PC-9 (cell line): ENCODE measurements at regions of chr7 and their contacts with region 1.

Region 1: DNA sequence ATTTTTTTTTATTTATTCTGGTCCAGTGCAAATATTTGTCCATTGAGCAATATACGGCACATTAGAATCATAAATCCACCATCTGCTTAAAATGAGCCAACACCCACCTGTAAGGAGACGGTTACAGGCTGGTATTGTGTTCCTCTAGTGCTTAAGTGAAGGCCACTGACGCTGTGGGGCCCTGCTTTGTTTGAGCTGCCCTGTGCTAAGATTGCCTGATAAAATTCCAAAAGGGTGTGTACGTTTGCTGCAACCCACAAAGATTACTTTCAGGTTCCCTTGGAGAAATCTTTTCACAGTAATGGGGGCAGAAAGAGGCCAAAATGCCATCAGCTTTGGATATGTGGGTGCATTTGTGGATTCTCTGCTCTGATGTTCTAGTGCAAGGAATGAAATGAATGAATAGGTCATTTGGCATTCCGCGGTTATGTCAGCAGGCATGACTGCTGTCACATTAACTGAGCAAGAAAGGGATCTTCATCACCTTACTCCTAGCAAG is 34.4 kb downstream of the AGR3 start:
- DNase-seq: peak; percentile 90 to 100
- H3K4me3 ChIP-seq: peak overlapping the region; percentile 39; the same call in 1 of the 2 replicates
- H3K27ac ChIP-seq: peak overlapping the region; percentile 87
- H3K4me1 ChIP-seq: peaks cover 59% of the 10 kb centered on the region
- H3K27me3 ChIP-seq: no peaks in the 10 kb centered on the region
- CTCF ChIP-seq: no peak

Region 2: DNA sequence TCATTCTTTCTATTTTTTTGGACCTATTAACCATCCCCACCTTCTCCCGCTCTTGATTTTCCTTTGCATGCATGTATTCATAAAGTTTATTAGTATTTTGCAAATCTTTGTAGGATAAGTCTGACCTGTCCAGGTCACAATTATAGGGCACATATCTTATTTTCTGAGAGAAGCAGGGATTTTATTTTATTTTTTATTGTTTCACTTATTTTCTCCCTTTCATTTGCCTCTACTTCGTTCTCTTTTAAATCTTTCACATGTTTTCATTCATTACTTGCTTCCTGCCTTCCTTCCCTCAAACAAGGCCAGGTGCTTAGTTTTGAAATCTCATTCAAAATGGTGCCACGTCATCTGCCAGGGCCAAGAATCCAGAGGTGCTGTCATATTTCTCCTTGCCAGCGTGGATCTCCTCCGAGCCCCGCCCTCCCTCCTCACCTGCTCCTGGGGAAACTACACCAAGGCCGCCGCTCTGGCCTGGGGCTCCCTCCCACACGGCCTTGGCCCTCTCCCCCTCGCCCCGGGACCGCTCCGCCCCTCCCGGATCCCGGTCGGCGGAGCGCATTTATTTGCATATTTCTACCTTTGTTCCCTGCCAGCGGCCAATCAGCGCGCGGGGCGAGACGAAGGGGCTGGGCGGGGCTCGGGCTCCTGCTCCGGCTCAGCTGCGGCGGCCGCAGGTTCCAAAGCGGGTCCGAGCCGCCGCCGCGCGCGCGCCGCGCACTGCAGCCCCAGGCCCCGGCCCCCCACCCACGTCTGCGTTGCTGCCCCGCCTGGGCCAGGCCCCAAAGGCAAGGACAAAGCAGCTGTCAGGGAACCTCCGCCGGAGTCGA is 94.1 kb before region 1 on chr7 and contains the start of gene TSPAN13:
- CTCF ChIA-PET with region 1: no interaction called
- POLR2A ChIA-PET with region 1: no interaction called
- intact Hi-C with region 1: loop called (anchors 2 kb)
- DNase-seq: peak; percentile 97 to 99
- H3K4me3 ChIP-seq: peak within 1 kb of the TSS; percentile 65
- H3K27ac ChIP-seq: peak within 1 kb of the TSS; percentile 60
- H3K4me1 ChIP-seq: peaks cover 28% of the 10 kb centered on the region
- H3K27me3 ChIP-seq: no peaks in the 10 kb centered on the region
- CTCF ChIP-seq: no peak
- total RNA-seq, gene TSPAN13: 26.5 and 31.1 TPM in 2 replicates

Region 3: DNA sequence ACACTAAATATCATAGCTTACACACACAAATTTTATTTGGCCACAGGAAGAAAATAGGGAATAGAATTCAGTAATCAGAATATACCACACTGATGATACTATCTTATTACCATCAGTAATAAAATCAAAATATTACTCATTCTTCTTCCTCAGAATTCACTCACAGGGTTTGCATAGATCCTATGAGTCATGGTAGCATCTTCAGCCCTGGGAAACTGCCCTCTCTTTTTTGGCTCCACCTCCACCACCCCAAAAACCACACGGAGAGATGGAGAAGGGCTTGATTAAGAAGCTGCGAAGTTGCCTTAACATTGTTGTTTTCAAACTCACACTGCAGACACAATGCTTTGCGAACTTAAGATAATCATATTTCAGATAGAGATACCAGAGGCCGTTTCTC is 296.9 kb after region 1 on chr7:
- CTCF ChIA-PET with region 1: no interaction called
- POLR2A ChIA-PET with region 1: no interaction called
- intact Hi-C with region 1: no loop called
- DNase-seq: peak in 1 of 2 experiments; percentile 12
- H3K4me3 ChIP-seq: no peak overlapping the region
- H3K27ac ChIP-seq: no peak overlapping the region
- H3K4me1 ChIP-seq: peaks cover 15% of the 10 kb centered on the region; the same call in 1 of the 2 replicates
- H3K27me3 ChIP-seq: no peaks in the 10 kb centered on the region
- CTCF ChIP-seq: no peak

Region 4: GRCh38 chr7:18228686-18229085 is 1381.3 kb after region 1 on chr7:
- CTCF ChIA-PET with region 1: interaction called, 21 read pairs
- POLR2A ChIA-PET with region 1: no interaction called
- intact Hi-C with region 1: no loop called
- DNase-seq: no peak
- H3K4me3 ChIP-seq: no peak overlapping the region
- H3K27ac ChIP-seq: no peak overlapping the region
- H3K4me1 ChIP-seq: no peaks in the 10 kb centered on the region
- H3K27me3 ChIP-seq: no peaks in the 10 kb centered on the region
- CTCF ChIP-seq: no peak

Region 5: GRCh38 chr7:18505870-18506460 is 1658.5 kb after region 1 on chr7:
- CTCF ChIA-PET with region 1: no interaction called
- POLR2A ChIA-PET with region 1: no interaction called
- intact Hi-C with region 1: no loop called
- DNase-seq: peak in 1 of 2 experiments; percentile 11
- H3K4me3 ChIP-seq: no peak overlapping the region
- H3K27ac ChIP-seq: no peak overlapping the region
- H3K4me1 ChIP-seq: peaks cover 30% of the 10 kb centered on the region
- H3K27me3 ChIP-seq: no peaks in the 10 kb centered on the region
- CTCF ChIP-seq: no peak